Caco-2 (cell line): ENCODE measurements at regions of chr10 and their contacts with region 1.

Region 1: GRCh38 chr10:75401569-75402485 is at the start of gene ZNF503:
- DNase-seq: peak; percentile 98 to 99
- H3K4me3 ChIP-seq: peak within 1 kb of the TSS; percentile 99
- H3K4me3 Mint-ChIP-seq: peak within 1 kb of the TSS; percentile 94
- H3K27ac Mint-ChIP-seq: peak within 1 kb of the TSS; percentile 95
- H3K4me1 ChIP-seq: peaks cover 9% of the 10 kb centered on the region
- H3K4me1 Mint-ChIP-seq: peaks cover 7% of the 10 kb centered on the region
- H3K27me3 ChIP-seq: no peaks in the 10 kb centered on the region
- H3K27me3 Mint-ChIP-seq: no peaks in the 10 kb centered on the region
- CTCF ChIP-seq: no peak
- total RNA-seq, gene ZNF503: 35.5 and 35.7 TPM in 2 replicates

Region 2: GRCh38 chr10:75254739-75255138 is 147.1 kb before region 1 on chr10:
- CTCF ChIA-PET with region 1: no interaction called
- POLR2A ChIA-PET with region 1: interaction called, 15 read pairs
- intact Hi-C with region 1: no loop called
- DNase-seq: no peak
- H3K4me3 ChIP-seq: no peak overlapping the region
- H3K4me3 Mint-ChIP-seq: no peak overlapping the region
- H3K27ac Mint-ChIP-seq: no peak overlapping the region
- H3K4me1 ChIP-seq: no peaks in the 10 kb centered on the region
- H3K4me1 Mint-ChIP-seq: no peaks in the 10 kb centered on the region
- H3K27me3 ChIP-seq: no peaks in the 10 kb centered on the region
- H3K27me3 Mint-ChIP-seq: no peaks in the 10 kb centered on the region
- CTCF ChIP-seq: no peak

Region 3: GRCh38 chr10:75469006-75469616 is 67.3 kb after region 1 on chr10:
- CTCF ChIA-PET with region 1: no interaction called
- POLR2A ChIA-PET with region 1: no interaction called
- intact Hi-C with region 1: no loop called
- DNase-seq: peak; percentile 41 to 50
- H3K4me3 ChIP-seq: no peak overlapping the region
- H3K4me3 Mint-ChIP-seq: no peak overlapping the region
- H3K27ac Mint-ChIP-seq: peak overlapping the region; percentile 23
- H3K4me1 ChIP-seq: peaks cover 5% of the 10 kb centered on the region; the same call in 1 of the 2 replicates
- H3K4me1 Mint-ChIP-seq: peaks cover 19% of the 10 kb centered on the region
- H3K27me3 ChIP-seq: no peaks in the 10 kb centered on the region
- H3K27me3 Mint-ChIP-seq: no peaks in the 10 kb centered on the region
- CTCF ChIP-seq: no peak

Region 4: GRCh38 chr10:75623310-75624093 is 221.7 kb after region 1 on chr10:
- CTCF ChIA-PET with region 1: no interaction called
- POLR2A ChIA-PET with region 1: no interaction called
- intact Hi-C with region 1: loop called (anchors 10 kb)
- DNase-seq: no peak
- H3K4me3 ChIP-seq: no peak overlapping the region
- H3K4me3 Mint-ChIP-seq: no peak overlapping the region
- H3K27ac Mint-ChIP-seq: no peak overlapping the region
- H3K4me1 ChIP-seq: no peaks in the 10 kb centered on the region
- H3K4me1 Mint-ChIP-seq: no peaks in the 10 kb centered on the region
- H3K27me3 ChIP-seq: no peaks in the 10 kb centered on the region
- H3K27me3 Mint-ChIP-seq: no peaks in the 10 kb centered on the region
- CTCF ChIP-seq: no peak

Region 5: DNA sequence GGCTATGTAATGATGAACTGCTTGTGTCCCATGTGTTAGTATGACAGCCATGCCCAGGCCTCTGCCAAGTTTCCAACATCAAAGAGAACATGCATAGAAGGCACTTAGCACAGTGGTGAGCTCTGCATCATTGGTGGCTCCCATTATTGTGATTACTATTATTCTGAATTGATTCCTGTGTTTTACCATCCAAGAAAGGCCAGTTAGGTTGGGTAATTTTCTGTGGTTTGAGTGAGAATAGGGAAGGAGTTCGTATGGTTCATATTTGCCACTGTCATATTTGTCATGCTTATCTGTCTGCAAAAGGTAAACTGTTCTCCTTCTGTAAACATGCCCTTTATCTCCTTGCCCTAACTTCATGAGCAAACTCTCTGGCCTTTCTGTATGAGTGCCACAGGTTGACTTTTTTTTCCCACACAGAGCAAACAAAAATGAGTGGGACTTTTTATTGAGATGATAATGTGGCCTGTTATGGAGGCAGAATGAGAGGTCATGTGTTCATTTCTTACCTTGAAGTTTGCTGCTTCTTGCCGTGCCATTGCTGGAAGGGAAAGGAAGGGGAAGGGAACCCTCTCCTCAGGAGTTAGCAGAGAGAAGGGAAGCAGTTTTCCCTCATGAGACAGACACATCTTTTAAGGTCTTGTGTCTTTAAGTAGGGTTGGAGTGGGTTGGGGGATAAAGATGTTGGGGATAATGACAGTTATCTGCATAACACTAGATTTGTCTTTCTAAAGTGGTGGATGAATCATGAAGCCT is 331.5 kb after region 1 on chr10:
- CTCF ChIA-PET with region 1: no interaction called
- POLR2A ChIA-PET with region 1: no interaction called
- intact Hi-C with region 1: loop called (anchors 10 kb)
- DNase-seq: peak; percentile 54 to 57
- H3K4me3 ChIP-seq: no peak overlapping the region
- H3K4me3 Mint-ChIP-seq: peak overlapping the region; percentile 9
- H3K27ac Mint-ChIP-seq: peak overlapping the region; percentile 24
- H3K4me1 ChIP-seq: peaks cover 22% of the 10 kb centered on the region
- H3K4me1 Mint-ChIP-seq: peaks cover 16% of the 10 kb centered on the region
- H3K27me3 ChIP-seq: no peaks in the 10 kb centered on the region
- H3K27me3 Mint-ChIP-seq: no peaks in the 10 kb centered on the region
- CTCF ChIP-seq: no peak

Region 6: GRCh38 chr10:76036111-76036940 is 634.5 kb after region 1 on chr10:
- CTCF ChIA-PET with region 1: interaction called, 5 read pairs
- POLR2A ChIA-PET with region 1: no interaction called
- intact Hi-C with region 1: loop called (anchors 1 kb)
- DNase-seq: peak; percentile 56 to 66
- H3K4me3 ChIP-seq: no peak overlapping the region
- H3K4me3 Mint-ChIP-seq: no peak overlapping the region
- H3K27ac Mint-ChIP-seq: no peak overlapping the region
- H3K4me1 ChIP-seq: peaks cover 14% of the 10 kb centered on the region
- H3K4me1 Mint-ChIP-seq: peaks cover 21% of the 10 kb centered on the region
- H3K27me3 ChIP-seq: no peaks in the 10 kb centered on the region
- H3K27me3 Mint-ChIP-seq: no peaks in the 10 kb centered on the region
- CTCF ChIP-seq: peak; percentile 65 to 66

Region 7: DNA sequence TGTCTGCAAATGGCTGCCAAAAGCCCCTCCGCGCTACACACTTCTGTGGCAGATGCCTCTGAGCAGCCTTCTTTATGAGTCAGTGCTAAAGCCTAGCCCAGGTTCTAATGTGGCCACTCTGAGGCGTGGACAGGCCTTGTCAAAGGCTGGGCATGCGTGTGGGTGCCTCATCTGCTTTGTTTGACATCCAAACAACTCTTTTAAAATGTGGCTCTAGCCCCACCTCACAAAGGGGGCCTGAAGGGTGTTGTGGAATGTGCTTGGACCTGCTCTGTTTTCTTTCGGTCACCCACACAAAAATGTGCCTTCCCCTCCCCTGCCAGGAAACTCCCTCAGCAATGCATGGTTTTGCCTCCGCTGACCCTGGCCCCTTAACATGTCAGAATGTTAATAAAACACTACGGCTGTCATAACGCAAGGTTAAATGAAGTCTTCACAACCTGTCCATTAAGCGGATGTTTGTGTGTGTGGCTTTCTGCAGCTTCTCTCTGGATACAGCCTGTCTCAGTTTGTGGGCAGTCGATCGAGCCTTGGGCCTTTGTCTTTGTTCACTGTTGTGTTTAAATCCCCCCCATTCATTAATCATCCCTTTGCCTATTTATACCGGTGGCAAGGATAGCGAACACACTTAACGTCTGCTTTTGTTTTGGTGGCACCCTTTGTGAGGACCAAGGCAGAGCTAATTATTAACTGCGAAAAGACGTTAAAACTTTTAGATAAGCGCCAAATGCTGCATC is 748.5 kb after region 1 on chr10:
- CTCF ChIA-PET with region 1: no interaction called
- POLR2A ChIA-PET with region 1: no interaction called
- intact Hi-C with region 1: loop called (anchors 2 kb)
- DNase-seq: peak; percentile 93 to 95
- H3K4me3 ChIP-seq: peak overlapping the region; percentile 17; the same call in 1 of the 2 replicates
- H3K4me3 Mint-ChIP-seq: peak overlapping the region; percentile 68
- H3K27ac Mint-ChIP-seq: peak overlapping the region; percentile 99
- H3K4me1 ChIP-seq: peaks cover 26% of the 10 kb centered on the region
- H3K4me1 Mint-ChIP-seq: peaks cover 28% of the 10 kb centered on the region
- H3K27me3 ChIP-seq: no peaks in the 10 kb centered on the region
- H3K27me3 Mint-ChIP-seq: no peaks in the 10 kb centered on the region
- CTCF ChIP-seq: no peak

Region 8: DNA sequence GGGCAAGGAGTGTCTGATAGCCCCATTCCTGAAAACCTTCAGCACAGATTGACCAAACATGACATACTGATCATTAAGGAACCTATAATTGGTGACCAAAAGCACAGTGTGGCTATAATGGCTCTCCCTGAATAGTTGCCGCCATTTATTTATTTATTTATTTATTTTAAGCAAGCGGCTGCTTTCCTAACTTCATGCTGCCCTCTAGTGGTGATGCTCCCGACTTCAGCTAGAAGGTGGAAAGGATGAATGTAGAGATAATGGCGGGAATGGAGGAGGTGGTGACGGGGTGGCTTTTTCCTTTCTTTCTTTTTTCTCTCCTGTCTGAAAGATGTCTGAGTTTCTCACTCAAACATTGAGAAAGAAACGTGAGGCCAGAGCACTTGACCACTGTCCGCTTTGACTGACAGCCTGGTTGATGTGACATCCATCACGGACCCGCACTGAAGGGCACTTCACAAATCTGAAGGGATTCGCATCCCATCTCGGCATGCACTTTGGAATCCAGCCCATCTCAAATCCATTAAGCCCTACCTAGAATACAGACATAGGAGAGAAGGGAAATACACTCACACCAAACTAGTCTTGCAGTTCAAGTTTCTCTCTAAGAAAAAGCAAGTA is 1145.6 kb after region 1 on chr10:
- CTCF ChIA-PET with region 1: no interaction called
- POLR2A ChIA-PET with region 1: no interaction called
- intact Hi-C with region 1: loop called (anchors 10 kb)
- DNase-seq: peak; percentile 78 to 87
- H3K4me3 ChIP-seq: no peak overlapping the region
- H3K4me3 Mint-ChIP-seq: no peak overlapping the region
- H3K27ac Mint-ChIP-seq: no peak overlapping the region
- H3K4me1 ChIP-seq: peaks cover 7% of the 10 kb centered on the region
- H3K4me1 Mint-ChIP-seq: peaks cover 7% of the 10 kb centered on the region
- H3K27me3 ChIP-seq: no peaks in the 10 kb centered on the region
- H3K27me3 Mint-ChIP-seq: no peaks in the 10 kb centered on the region
- CTCF ChIP-seq: peak; percentile 81 to 85